ENCODE measurements at regions of chr17 and their contacts with region 1.

Region 1: GRCh38 chr17:80195731-80196529 is 24.2 kb downstream of the SGSH start:
- DNase-seq: peak; percentile 74
- ATAC-seq: peak; percentile 53
- H3K4me3 Mint-ChIP-seq: no peak overlapping the region
- H3K27ac Mint-ChIP-seq: no peak overlapping the region
- H3K4me1 Mint-ChIP-seq: no peaks in the 10 kb centered on the region
- H3K27me3 Mint-ChIP-seq: peaks cover 3% of the 10 kb centered on the region

Region 2: GRCh38 chr17:79400989-79401703 is 794.8 kb before region 1 on chr17:
- CTCF ChIA-PET with region 1: no interaction called
- POLR2A ChIA-PET with region 1: no interaction called
- intact Hi-C with region 1: no loop called
- DNase-seq: peak; percentile 84
- ATAC-seq: peak; percentile 96
- H3K4me3 Mint-ChIP-seq: peak overlapping the region; percentile 56
- H3K27ac Mint-ChIP-seq: peak overlapping the region; percentile 44
- H3K4me1 Mint-ChIP-seq: peaks cover 12% of the 10 kb centered on the region
- H3K27me3 Mint-ChIP-seq: peaks cover 39% of the 10 kb centered on the region

Region 3: DNA sequence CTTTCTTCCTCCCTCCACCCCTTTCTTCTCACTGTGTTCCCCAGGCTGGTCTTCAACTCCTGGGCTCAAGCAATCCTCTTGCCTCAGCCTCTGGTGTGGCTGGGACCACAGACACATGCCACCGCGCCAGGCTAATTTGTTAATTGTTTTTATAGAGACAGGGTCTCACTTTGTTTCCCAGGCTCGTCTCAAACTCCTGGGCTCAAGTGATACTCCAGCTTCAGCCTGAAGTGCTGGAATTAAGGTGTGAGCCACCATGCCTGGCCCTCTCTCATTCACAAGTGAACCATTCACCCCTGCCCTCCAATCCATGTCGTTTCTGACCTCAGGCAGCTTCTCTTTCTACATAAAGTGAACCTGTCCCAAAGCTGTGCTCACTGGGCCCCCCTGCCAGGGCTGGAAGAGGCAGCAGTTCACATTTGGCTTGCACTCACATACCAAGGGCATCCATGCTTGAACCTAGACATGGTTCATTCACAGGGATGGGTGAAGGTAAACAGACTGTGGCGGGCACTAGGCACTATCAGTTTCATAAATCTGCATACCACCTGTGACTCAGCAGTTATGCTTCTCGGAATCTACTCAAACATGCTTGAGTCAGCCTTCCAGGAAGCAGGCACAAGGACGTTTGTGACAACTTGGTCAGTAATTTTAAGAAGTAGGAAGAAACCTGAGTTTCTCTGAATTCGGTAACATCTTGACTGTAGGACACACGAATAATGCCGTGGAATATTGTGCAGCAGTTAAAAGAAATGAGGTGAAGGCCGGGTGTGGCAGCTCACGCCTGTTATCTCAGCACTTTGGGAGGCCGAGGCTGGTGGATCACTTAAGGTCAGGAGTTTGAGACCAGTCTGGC is 58.7 kb after region 1 on chr17:
- CTCF ChIA-PET with region 1: interaction called, 5 read pairs
- POLR2A ChIA-PET with region 1: interaction called, 3 read pairs
- intact Hi-C with region 1: loop called (anchors 1 to 2 kb)
- DNase-seq: peak; percentile 83
- ATAC-seq: peak; percentile 62
- H3K4me3 Mint-ChIP-seq: peak overlapping the region; percentile 64
- H3K27ac Mint-ChIP-seq: peak overlapping the region; percentile 97
- H3K4me1 Mint-ChIP-seq: peaks cover 71% of the 10 kb centered on the region
- H3K27me3 Mint-ChIP-seq: no peaks in the 10 kb centered on the region

Region 4: DNA sequence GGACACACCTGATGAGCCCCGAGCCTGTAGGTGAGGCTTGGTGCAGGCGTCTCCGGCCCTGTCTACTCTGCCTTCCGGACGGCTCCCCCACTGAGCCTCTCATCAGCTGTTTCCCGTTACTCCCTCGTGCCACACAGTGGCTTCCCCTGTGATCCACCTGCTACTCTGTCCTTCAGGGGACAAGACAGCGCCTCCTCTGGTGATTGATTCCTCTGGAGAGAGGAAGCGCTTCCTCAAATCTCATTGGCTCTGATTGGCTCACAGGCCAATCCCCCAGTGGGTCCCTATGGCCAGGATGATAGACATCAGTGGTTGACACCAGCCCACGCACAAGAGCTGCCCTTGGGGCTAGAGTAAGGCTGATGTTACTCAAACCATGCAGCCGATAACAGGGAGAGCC is 88.7 kb after region 1 on chr17:
- CTCF ChIA-PET with region 1: no interaction called
- POLR2A ChIA-PET with region 1: no interaction called
- intact Hi-C with region 1: no loop called
- DNase-seq: no peak
- ATAC-seq: peak; percentile 30
- H3K4me3 Mint-ChIP-seq: no peak overlapping the region
- H3K27ac Mint-ChIP-seq: peak overlapping the region; percentile 0
- H3K4me1 Mint-ChIP-seq: peaks cover 5% of the 10 kb centered on the region
- H3K27me3 Mint-ChIP-seq: no peaks in the 10 kb centered on the region

Region 5: DNA sequence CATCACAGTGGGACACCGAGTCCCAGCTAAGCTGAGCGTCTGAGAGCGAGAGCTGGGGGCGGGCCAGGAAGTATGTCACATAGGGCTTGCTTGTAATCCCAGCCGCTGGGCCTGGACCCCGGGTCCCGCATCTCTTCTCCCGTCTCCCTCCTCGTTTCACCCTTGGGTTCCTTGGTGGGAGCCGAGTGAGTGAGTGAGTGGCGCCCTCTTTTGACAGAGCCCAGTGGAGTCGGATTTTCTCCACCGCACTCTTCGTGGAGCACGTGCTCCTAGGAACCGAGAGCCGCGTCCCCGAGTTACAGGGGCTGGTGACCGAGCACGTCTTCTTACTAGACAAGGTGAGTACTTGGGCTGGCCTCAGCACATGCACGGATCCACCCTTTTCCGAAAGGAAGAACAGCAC is 168.3 kb after region 1 on chr17:
- CTCF ChIA-PET with region 1: interaction called, 3 read pairs
- POLR2A ChIA-PET with region 1: no interaction called
- intact Hi-C with region 1: loop called in 1 of 2 experiments (anchors 5 kb)
- DNase-seq: peak; percentile 41
- ATAC-seq: peak; percentile 23
- H3K4me3 Mint-ChIP-seq: no peak overlapping the region
- H3K27ac Mint-ChIP-seq: no peak overlapping the region
- H3K4me1 Mint-ChIP-seq: no peaks in the 10 kb centered on the region
- H3K27me3 Mint-ChIP-seq: no peaks in the 10 kb centered on the region

Region 6: GRCh38 chr17:80389011-80389995 is 193.4 kb after region 1 on chr17:
- CTCF ChIA-PET with region 1: no interaction called
- POLR2A ChIA-PET with region 1: no interaction called
- intact Hi-C with region 1: loop called in 1 of 2 experiments (anchors 10 kb)
- DNase-seq: no peak
- ATAC-seq: no peak
- H3K4me3 Mint-ChIP-seq: no peak overlapping the region
- H3K27ac Mint-ChIP-seq: peak overlapping the region; percentile 6
- H3K4me1 Mint-ChIP-seq: no peaks in the 10 kb centered on the region
- H3K27me3 Mint-ChIP-seq: no peaks in the 10 kb centered on the region

Measured in activated CD4-positive, alpha-beta T cell treated with anti-CD3 and anti-CD28 coated beads for 36 hours (primary cell).